ENCODE measurements at regions of chr10 and their contacts with region 1.

Region 1: GRCh38 chr10:32980558-32981468 is 22.8 kb upstream of the ITGB1 start:
- DNase-seq: peak; percentile 96 to 97
- ATAC-seq: peak; percentile 94
- H3K4me3 ChIP-seq: peak overlapping the region; percentile 32 to 51
- H3K27ac ChIP-seq: peak overlapping the region; percentile 72 to 100
- H3K4me1 ChIP-seq: no peaks in the 10 kb centered on the region
- H3K27me3 ChIP-seq: no peaks in the 10 kb centered on the region

Region 2: GRCh38 chr10:32906595-32906994 is 74.2 kb before region 1 on chr10:
- intact Hi-C with region 1: no loop called
- DNase-seq: no peak
- ATAC-seq: no peak
- H3K4me3 ChIP-seq: no peak overlapping the region
- H3K27ac ChIP-seq: no peak overlapping the region
- H3K4me1 ChIP-seq: no peaks in the 10 kb centered on the region
- H3K27me3 ChIP-seq: no peaks in the 10 kb centered on the region

Region 3: GRCh38 chr10:32958085-32959005 is 22.5 kb before region 1 on chr10 and contains the start of gene ITGB1:
- intact Hi-C with region 1: loop called (anchors 2 kb)
- DNase-seq: peak; percentile 98 to 99
- ATAC-seq: peak; percentile 97
- H3K4me3 ChIP-seq: peak within 1 kb of the TSS; percentile 90 to 97
- H3K27ac ChIP-seq: peak within 1 kb of the TSS; percentile 88 to 96
- H3K4me1 ChIP-seq: peaks cover 0 to 9% of the 10 kb centered on the region in 2 donors
- H3K27me3 ChIP-seq: no peaks in the 10 kb centered on the region
- total RNA-seq, gene ITGB1: 870 to 1,426 TPM

Region 4: GRCh38 chr10:33073641-33074415 is 93.0 kb after region 1 on chr10:
- intact Hi-C with region 1: no loop called
- DNase-seq: no peak
- ATAC-seq: peak; percentile 42
- H3K4me3 ChIP-seq: no peak overlapping the region
- H3K27ac ChIP-seq: no peak overlapping the region
- H3K4me1 ChIP-seq: no peaks in the 10 kb centered on the region
- H3K27me3 ChIP-seq: peaks cover 0 to 2% of the 10 kb centered on the region in 2 donors

Measured in aorta (tissue), 5 donors.